ENCODE measurements at regions of chr1 and their contacts with region 1.

Region 1: GRCh38 chr1:147890177-147890790 is 12.3 kb upstream of the GJA8 start:
- DNase-seq: peak; percentile 65 to 87 (median 70)
- ATAC-seq: peak; percentile 83 to 93 (median 90)
- H3K4me3 ChIP-seq: no peak overlapping the region
- H3K27ac ChIP-seq: no peak overlapping the region
- H3K4me1 ChIP-seq: peaks cover 0 to 31% (median 5%) of the 10 kb centered on the region in 12 donors
- H3K27me3 ChIP-seq: peaks cover 0 to 6% (median 0%) of the 10 kb centered on the region in 9 donors
- CTCF ChIP-seq: peak; percentile 50 to 82 (median 72)
- POLR2A ChIP-seq: no peak

Region 2: DNA sequence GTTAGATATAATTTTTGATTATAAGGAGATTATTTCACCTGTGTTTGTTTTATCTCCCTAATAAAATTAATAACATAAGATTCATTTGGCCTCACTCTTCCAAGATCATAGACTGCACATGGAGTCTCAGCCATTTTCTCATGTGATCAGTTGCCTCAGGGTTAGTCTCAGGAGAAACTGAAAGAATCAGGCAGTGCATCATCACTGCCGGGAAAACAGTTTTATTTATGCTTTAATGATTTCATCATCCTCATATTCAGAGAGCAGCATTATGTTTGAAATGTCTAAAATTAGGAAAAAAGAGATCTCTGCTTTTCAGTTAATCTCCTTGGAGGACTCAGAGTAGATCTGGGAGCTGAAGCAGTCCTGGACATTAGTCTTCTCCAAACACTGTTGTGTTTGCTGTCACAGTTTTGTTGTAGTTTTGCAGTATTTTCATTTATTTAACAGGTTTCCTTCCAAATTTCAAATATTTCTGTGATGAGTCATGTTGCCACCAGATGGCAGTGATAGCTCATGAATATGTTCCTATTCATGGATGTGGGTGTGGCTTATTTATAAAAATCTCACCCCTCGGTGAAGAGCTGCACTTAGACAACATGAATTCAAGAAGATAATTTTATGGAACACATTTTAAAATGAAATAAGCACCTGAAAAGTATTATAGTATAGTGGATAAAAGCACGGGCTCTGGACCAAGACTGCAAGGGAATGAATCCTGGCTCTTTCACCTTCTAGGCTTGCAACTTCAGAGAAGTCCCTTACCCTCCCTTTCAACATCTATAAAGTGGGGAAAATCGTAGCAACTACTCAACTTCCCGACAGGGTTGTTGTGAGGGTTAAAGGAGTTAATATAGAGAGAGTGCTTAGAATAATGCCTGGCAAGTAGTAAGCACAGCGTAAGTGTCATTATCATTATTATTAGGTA is 616.6 kb before region 1 on chr1:
- intact Hi-C with region 1: loop called in 6 of 10 experiments (anchors 5 to 10 kb)
- DNase-seq: peak in 2 of 5 donors; percentile 22 to 30
- ATAC-seq: peak in 3 of 4 donors; percentile 66 to 89 (median 80)
- H3K4me3 ChIP-seq: no peak overlapping the region
- H3K27ac ChIP-seq: peak overlapping the region in 6 of 12 donors; percentile 2 to 61 (median 18)
- H3K4me1 ChIP-seq: peaks cover 0 to 16% (median 6%) of the 10 kb centered on the region in 12 donors
- H3K27me3 ChIP-seq: no peaks in the 10 kb centered on the region
- CTCF ChIP-seq: peak; percentile 29 to 73 (median 51)
- POLR2A ChIP-seq: no peak

Region 3: DNA sequence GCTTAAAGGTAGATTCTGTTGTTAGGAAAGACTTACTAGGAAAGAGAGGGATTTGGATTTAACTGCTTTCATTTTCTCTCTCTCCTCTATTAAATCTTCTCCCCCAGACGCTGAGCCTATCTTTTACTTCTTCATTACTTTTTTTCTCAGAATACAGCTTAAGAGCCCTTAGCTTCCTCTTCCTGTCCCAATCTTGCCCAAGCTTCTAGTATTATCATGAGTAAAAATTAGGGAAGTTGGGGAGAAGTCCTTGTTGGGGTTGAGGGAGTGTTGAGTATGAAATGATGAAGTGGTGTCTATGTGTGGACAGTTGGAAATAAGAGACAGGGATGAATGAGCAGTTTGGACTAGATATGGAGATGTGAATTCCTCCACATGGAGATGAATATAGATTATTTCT is 254.9 kb before region 1 on chr1:
- intact Hi-C with region 1: loop called in 6 of 10 experiments (anchors 2 to 5 kb)
- DNase-seq: no peak
- ATAC-seq: peak; percentile 32 to 63 (median 45)
- H3K4me3 ChIP-seq: peak overlapping the region in 1 of 12 donors; percentile 12
- H3K27ac ChIP-seq: peak overlapping the region in 1 of 12 donors; percentile 73
- H3K4me1 ChIP-seq: peaks cover 0 to 11% (median 0%) of the 10 kb centered on the region in 12 donors
- H3K27me3 ChIP-seq: no peaks in the 10 kb centered on the region
- CTCF ChIP-seq: no peak
- POLR2A ChIP-seq: no peak

Region 4: GRCh38 chr1:147647796-147648633 is 242.3 kb before region 1 on chr1:
- intact Hi-C with region 1: loop called in 6 of 10 experiments (anchors 2 to 5 kb)
- DNase-seq: no peak
- ATAC-seq: peak in 1 of 4 donors; percentile 42
- H3K4me3 ChIP-seq: peak overlapping the region in 1 of 12 donors; percentile 8
- H3K27ac ChIP-seq: peak overlapping the region in 1 of 12 donors; percentile 46
- H3K4me1 ChIP-seq: peaks cover 0 to 3% (median 0%) of the 10 kb centered on the region in 12 donors
- H3K27me3 ChIP-seq: no peaks in the 10 kb centered on the region
- CTCF ChIP-seq: no peak
- POLR2A ChIP-seq: no peak

Region 5: DNA sequence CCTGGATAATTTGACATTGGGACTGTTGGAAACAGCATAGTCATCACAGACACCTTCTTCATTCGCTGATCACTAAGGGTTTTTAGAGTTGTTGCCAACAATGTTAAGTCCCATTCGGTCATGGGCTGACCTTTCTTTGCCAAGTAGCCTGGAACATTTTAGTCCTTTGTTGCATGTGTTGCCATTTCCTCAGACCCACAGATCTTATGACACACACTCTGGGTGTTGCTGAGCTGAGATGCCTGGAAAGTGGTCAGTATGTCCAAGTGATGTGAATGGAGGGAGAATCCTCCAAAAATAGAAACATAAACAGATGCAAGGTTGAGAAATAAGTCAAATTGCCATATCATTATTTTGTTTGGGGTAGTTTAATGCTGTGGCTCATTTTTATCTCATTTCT is 68.4 kb before region 1 on chr1:
- intact Hi-C with region 1: loop called in 2 of 10 experiments (anchors 5 kb)
- DNase-seq: peak in 4 of 5 donors; percentile 33 to 56 (median 49)
- ATAC-seq: peak; percentile 95 to 97 (median 96)
- H3K4me3 ChIP-seq: no peak overlapping the region
- H3K27ac ChIP-seq: peak overlapping the region in 11 of 12 donors; percentile 36 to 90 (median 65)
- H3K4me1 ChIP-seq: peaks cover 0 to 22% (median 14%) of the 10 kb centered on the region in 12 donors
- H3K27me3 ChIP-seq: no peaks in the 10 kb centered on the region
- CTCF ChIP-seq: no peak
- POLR2A ChIP-seq: no peak

Measured in heart left ventricle (tissue), 16 donors.